Pancreas (tissue), 10 donors: ENCODE measurements at regions of chr15 and their contacts with region 1.

Region 1: GRCh38 chr15:66714543-66714981 is 12.5 kb downstream of the SMAD6 start:
- DNase-seq: no peak
- ATAC-seq: peak; percentile 15 to 37 (median 27)
- H3K4me3 ChIP-seq: no peak overlapping the region
- H3K27ac ChIP-seq: peak overlapping the region in 2 of 4 donors; percentile 23 to 33
- H3K4me1 ChIP-seq: peaks cover 6 to 16% (median 13%) of the 10 kb centered on the region in 3 donors
- H3K27me3 ChIP-seq: no peaks in the 10 kb centered on the region
- CTCF ChIP-seq: no peak

Region 2: GRCh38 chr15:66756295-66756694 is 41.7 kb after region 1 on chr15:
- intact Hi-C with region 1: loop called in 1 of 3 experiments (anchors 5 kb)
- DNase-seq: no peak
- ATAC-seq: no peak
- H3K4me3 ChIP-seq: no peak overlapping the region
- H3K27ac ChIP-seq: no peak overlapping the region
- H3K4me1 ChIP-seq: peaks cover 3 to 18% (median 13%) of the 10 kb centered on the region in 3 donors
- H3K27me3 ChIP-seq: no peaks in the 10 kb centered on the region
- CTCF ChIP-seq: no peak